Common myeloid progenitor, CD34-positive (primary cell): ENCODE measurements at regions of chr3 and their contacts with region 1.

Region 1: GRCh38 chr3:4736284-4736861 is 242.9 kb upstream of the BHLHE40 start:
- DNase-seq: peak in 2 of 3 donors; percentile 66 to 79
- H3K4me3 ChIP-seq: no peak overlapping the region
- H3K27ac ChIP-seq: no peak overlapping the region
- H3K4me1 ChIP-seq: peaks cover 12 to 64% (median 52%) of the 10 kb centered on the region in 4 experiments
- H3K27me3 ChIP-seq: no peaks in the 10 kb centered on the region

Region 2: GRCh38 chr3:4751502-4752101 is 15.2 kb after region 1 on chr3:
- CTCF ChIA-PET with region 1: interaction called, 14 read pairs
- POLR2A ChIA-PET with region 1: interaction called, 3 read pairs
- DNase-seq: peak in 2 of 3 donors; percentile 86
- H3K4me3 ChIP-seq: peak overlapping the region in 6 of 7 experiments; percentile 15 to 54 (median 34)
- H3K27ac ChIP-seq: peak overlapping the region; percentile 61 to 77
- H3K4me1 ChIP-seq: peaks cover 33 to 80% (median 57%) of the 10 kb centered on the region in 4 experiments
- H3K27me3 ChIP-seq: no peaks in the 10 kb centered on the region

Region 3: GRCh38 chr3:4820296-4821132 is 84.1 kb after region 1 on chr3:
- CTCF ChIA-PET with region 1: no interaction called
- POLR2A ChIA-PET with region 1: no interaction called
- DNase-seq: no peak
- H3K4me3 ChIP-seq: no peak overlapping the region
- H3K27ac ChIP-seq: no peak overlapping the region
- H3K4me1 ChIP-seq: peaks cover 5 to 13% (median 13%) of the 10 kb centered on the region in 4 experiments
- H3K27me3 ChIP-seq: no peaks in the 10 kb centered on the region

Region 4: DNA sequence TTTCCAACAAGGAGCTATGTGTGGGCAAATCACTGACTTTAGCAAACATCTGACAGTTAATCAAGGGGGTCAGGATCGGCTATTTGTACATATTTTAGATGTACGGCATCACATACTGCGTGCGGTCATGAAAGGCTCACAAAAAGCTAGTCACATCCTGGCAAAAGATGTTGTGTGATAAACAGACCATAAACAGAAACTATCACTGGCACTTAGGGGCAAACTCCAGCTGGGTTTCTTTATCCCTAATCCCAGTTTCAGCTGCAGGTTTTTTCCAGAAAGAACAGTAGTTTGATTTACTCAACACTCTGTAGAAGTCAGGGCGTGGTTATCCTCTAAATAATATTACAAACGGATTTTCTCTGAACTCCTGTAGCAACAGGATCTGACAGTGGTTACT is 130.5 kb after region 1 on chr3:
- CTCF ChIA-PET with region 1: no interaction called
- POLR2A ChIA-PET with region 1: no interaction called
- DNase-seq: peak in 1 of 3 donors; percentile 36
- H3K4me3 ChIP-seq: no peak overlapping the region
- H3K27ac ChIP-seq: peak overlapping the region in 1 of 2 experiments; percentile 85
- H3K4me1 ChIP-seq: peaks cover 6 to 25% (median 19%) of the 10 kb centered on the region in 4 experiments
- H3K27me3 ChIP-seq: no peaks in the 10 kb centered on the region